ENCODE measurements at regions of chr15 and their contacts with region 1.

Region 1: DNA sequence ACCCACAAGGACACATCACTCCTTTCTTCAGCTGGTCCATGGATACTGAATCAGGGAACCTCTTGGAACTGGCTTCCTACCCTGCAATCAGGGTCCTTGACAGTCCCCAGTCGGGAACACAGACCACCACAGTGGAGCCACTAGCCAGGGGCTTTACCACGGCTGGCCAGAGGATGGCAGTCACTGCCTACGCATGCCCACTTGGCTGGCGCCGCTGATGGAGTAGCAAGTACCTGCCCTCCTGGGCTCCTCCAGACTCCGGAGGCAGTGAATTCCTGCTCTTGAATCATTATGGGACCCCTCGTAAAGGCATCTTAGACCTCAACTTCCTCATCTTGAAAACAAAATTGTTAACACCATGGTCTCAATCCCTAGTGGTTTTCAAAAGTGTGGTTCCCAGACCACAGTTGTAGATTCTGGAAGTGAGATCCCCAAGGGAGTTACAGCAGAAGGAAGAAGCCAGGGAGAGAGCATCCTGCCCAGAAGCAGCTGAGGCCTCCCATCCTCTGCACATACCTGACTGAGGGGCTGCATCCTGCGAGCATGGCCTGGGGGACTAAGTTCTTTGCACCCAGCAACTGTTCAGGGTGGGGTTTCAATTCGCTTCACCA is 9.1 kb upstream of the SKIC8 start:
- DNase-seq: peak; percentile 79 to 81
- H3K4me3 ChIP-seq: no peak overlapping the region
- H3K27ac ChIP-seq: no peak overlapping the region
- H3K4me1 ChIP-seq: peaks cover 0 to 13% of the 10 kb centered on the region in 2 donors
- H3K27me3 ChIP-seq: no peaks in the 10 kb centered on the region
- CTCF ChIP-seq: peak; percentile 58 to 96 (median 88)
- POLR2A ChIP-seq: no peak

Region 2: GRCh38 chr15:78422571-78423340 is 114.2 kb after region 1 on chr15:
- intact Hi-C with region 1: loop called (anchors 2 kb)
- DNase-seq: peak; percentile 63 to 74
- H3K4me3 ChIP-seq: no peak overlapping the region
- H3K27ac ChIP-seq: no peak overlapping the region
- H3K4me1 ChIP-seq: no peaks in the 10 kb centered on the region
- H3K27me3 ChIP-seq: no peaks in the 10 kb centered on the region
- CTCF ChIP-seq: peak; percentile 73 to 93 (median 86)
- POLR2A ChIP-seq: no peak